ENCODE measurements at regions of chr12 and their contacts with region 1.

Region 1: GRCh38 chr12:122021822-122022526 is at the start of gene BCL7A:
- DNase-seq: peak; percentile 62
- H3K4me3 Mint-ChIP-seq: peak within 1 kb of the TSS; percentile 87
- H3K27ac Mint-ChIP-seq: peak within 1 kb of the TSS; percentile 61
- H3K4me1 Mint-ChIP-seq: peaks cover 11% of the 10 kb centered on the region
- H3K27me3 Mint-ChIP-seq: peaks cover 31% of the 10 kb centered on the region
- total RNA-seq, gene BCL7A: 3.7 to 4.2 TPM

Region 2: GRCh38 chr12:121968876-121969275 is 53.1 kb before region 1 on chr12:
- CTCF ChIA-PET with region 1: no interaction called
- POLR2A ChIA-PET with region 1: no interaction called
- DNase-seq: no peak
- H3K4me3 Mint-ChIP-seq: no peak overlapping the region
- H3K27ac Mint-ChIP-seq: no peak overlapping the region
- H3K4me1 Mint-ChIP-seq: no peaks in the 10 kb centered on the region
- H3K27me3 Mint-ChIP-seq: peaks cover 2% of the 10 kb centered on the region

Region 3: GRCh38 chr12:122004633-122005071 is 17.3 kb before region 1 on chr12:
- CTCF ChIA-PET with region 1: interaction called, 5 read pairs
- POLR2A ChIA-PET with region 1: interaction called, 13 read pairs
- DNase-seq: no peak
- H3K4me3 Mint-ChIP-seq: no peak overlapping the region
- H3K27ac Mint-ChIP-seq: no peak overlapping the region
- H3K4me1 Mint-ChIP-seq: peaks cover 27% of the 10 kb centered on the region
- H3K27me3 Mint-ChIP-seq: peaks cover 22% of the 10 kb centered on the region

Measured in activated CD4-positive, alpha-beta memory T cell treated with anti-CD3 and anti-CD28 coated beads, Interleukin-2, amount 10 ng/mL, durations not matched to agents 7 days and 5 days (primary cell).